ENCODE measurements at regions of chr11 and their contacts with region 1.

Region 1: DNA sequence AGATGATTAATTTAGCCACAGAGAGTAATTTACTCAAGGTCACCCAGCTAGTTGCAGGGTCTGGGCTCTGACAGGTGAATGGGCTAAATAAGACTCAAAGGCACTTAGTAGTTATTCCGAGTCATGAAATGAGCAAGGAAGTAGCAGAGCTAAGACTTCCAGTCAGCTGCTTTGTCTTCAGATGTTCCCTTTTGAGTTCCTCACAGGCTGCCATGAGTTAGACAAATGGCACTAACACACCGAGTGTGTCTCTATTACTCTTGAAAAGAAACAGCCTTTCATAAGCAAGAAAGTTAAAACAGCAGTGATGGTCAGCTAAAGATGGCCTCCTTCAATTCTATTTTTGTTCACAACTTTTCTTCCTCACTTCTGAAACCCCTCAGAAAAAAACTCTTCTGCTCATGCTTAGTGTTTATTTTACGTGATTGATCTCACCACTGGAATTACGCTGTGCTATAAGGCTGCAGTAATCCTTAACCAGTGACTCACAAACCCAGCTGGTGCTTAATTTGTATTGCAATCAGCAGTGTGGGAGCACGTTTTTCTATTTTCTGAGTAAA is 389.1 kb downstream of the AASDHPPT start:
- DNase-seq: peak; percentile 76 to 85
- H3K4me3 ChIP-seq: no peak overlapping the region
- H3K4me3 Mint-ChIP-seq: peak overlapping the region; percentile 67
- H3K27ac Mint-ChIP-seq: peak overlapping the region; percentile 88
- H3K4me1 ChIP-seq: peaks cover 92% of the 10 kb centered on the region
- H3K4me1 Mint-ChIP-seq: peaks cover 77% of the 10 kb centered on the region
- H3K27me3 ChIP-seq: no peaks in the 10 kb centered on the region
- H3K27me3 Mint-ChIP-seq: no peaks in the 10 kb centered on the region
- CTCF ChIP-seq: no peak

Region 2: GRCh38 chr11:106021967-106022794 is 444.4 kb before region 1 on chr11 and contains the start of gene MSANTD4:
- CTCF ChIA-PET with region 1: no interaction called
- POLR2A ChIA-PET with region 1: no interaction called
- intact Hi-C with region 1: loop called (anchors 1 kb)
- DNase-seq: peak; percentile 100
- H3K4me3 ChIP-seq: peak within 1 kb of the TSS; percentile 81
- H3K4me3 Mint-ChIP-seq: peak within 1 kb of the TSS; percentile 86
- H3K27ac Mint-ChIP-seq: peak within 1 kb of the TSS; percentile 51
- H3K4me1 ChIP-seq: peaks cover 11% of the 10 kb centered on the region
- H3K4me1 Mint-ChIP-seq: peaks cover 13% of the 10 kb centered on the region
- H3K27me3 ChIP-seq: no peaks in the 10 kb centered on the region
- H3K27me3 Mint-ChIP-seq: no peaks in the 10 kb centered on the region
- CTCF ChIP-seq: peak in 1 of 2 experiments; percentile 3
- total RNA-seq, gene MSANTD4: 24.2 and 25.7 TPM in 2 replicates

Region 3: GRCh38 chr11:106208775-106209174 is 257.8 kb before region 1 on chr11:
- CTCF ChIA-PET with region 1: no interaction called
- POLR2A ChIA-PET with region 1: no interaction called
- intact Hi-C with region 1: loop called (anchors 1 kb)
- DNase-seq: peak; percentile 85 to 95
- H3K4me3 ChIP-seq: no peak overlapping the region
- H3K4me3 Mint-ChIP-seq: peak overlapping the region; percentile 7
- H3K27ac Mint-ChIP-seq: peak overlapping the region; percentile 67
- H3K4me1 ChIP-seq: peaks cover 29% of the 10 kb centered on the region
- H3K4me1 Mint-ChIP-seq: peaks cover 27% of the 10 kb centered on the region
- H3K27me3 ChIP-seq: no peaks in the 10 kb centered on the region
- H3K27me3 Mint-ChIP-seq: no peaks in the 10 kb centered on the region
- CTCF ChIP-seq: no peak

Region 4: DNA sequence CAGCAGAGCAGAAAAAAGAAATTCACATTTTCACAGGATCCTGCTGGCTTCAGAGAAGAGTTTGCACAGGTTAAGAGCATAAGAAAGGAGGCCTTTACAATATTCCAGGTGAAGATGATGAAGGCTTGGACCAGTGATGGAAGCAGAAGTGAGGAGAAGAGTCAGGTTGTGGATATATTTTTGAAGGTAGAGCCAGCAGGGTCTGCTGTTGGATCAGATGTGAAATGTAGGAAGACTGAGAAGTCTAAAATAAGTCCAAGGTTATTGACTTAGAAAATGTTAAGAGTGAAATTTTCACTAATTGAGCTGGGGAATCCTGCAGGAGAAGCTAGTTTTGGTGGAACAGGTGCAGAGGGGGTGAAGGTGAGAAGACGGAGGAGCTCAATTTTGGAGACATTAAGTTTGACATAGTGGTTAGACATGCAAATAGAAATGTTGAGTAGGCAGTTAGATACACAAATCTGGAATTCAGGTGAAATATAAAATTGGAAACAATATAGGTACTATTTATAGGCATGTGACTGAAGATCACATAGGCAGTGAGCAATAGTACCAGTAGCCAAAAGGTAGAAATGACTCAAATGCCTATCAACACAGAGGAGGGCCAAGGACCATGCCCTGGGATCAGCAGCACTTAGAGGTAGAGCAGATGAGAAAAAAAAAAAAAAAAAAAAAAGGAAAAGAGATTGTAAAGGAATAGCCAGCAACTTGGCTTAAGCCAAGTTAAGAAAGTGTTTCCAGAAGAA is 137.2 kb before region 1 on chr11:
- CTCF ChIA-PET with region 1: no interaction called
- POLR2A ChIA-PET with region 1: no interaction called
- intact Hi-C with region 1: loop called (anchors 5 kb)
- DNase-seq: no peak
- H3K4me3 ChIP-seq: no peak overlapping the region
- H3K4me3 Mint-ChIP-seq: no peak overlapping the region
- H3K27ac Mint-ChIP-seq: no peak overlapping the region
- H3K4me1 ChIP-seq: no peaks in the 10 kb centered on the region; the same call in 1 of the 2 replicates
- H3K4me1 Mint-ChIP-seq: no peaks in the 10 kb centered on the region
- H3K27me3 ChIP-seq: no peaks in the 10 kb centered on the region
- H3K27me3 Mint-ChIP-seq: no peaks in the 10 kb centered on the region
- CTCF ChIP-seq: no peak

Region 5: DNA sequence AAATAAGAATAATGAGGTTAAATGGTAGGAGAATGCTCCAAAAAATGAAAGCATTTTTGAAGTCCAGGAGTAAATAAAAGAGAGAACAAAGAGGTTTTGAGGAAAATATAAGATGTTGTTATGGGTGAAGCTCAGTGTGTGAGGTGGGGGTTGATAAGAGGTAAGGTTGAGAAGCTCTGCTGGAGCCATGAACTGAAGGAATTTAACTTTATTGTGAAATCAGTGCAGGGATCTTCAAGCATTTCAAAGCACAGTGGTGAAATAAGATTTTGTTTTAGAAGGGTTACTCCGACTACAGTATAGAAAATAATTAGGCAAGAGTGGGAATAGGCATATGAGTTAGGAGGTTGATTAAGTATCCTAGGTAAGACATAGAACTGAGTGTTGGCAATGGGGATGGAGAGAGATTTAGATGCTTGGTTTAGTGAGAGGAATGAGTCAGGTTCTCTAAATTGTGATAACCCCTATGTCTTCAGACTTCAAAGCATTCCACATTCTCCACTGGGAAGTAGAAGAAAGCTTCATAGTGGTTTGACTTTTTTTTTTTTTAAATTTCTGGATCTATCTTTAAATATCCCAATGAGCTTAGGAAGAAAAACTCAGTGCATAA is 14.1 kb after region 1 on chr11:
- CTCF ChIA-PET with region 1: interaction called, 6 read pairs
- POLR2A ChIA-PET with region 1: interaction called, 22 read pairs
- intact Hi-C with region 1: loop called (anchors 1 kb)
- DNase-seq: peak in 1 of 2 experiments; percentile 68
- H3K4me3 ChIP-seq: no peak overlapping the region
- H3K4me3 Mint-ChIP-seq: peak overlapping the region; percentile 10
- H3K27ac Mint-ChIP-seq: peak overlapping the region; percentile 86
- H3K4me1 ChIP-seq: peaks cover 66% of the 10 kb centered on the region
- H3K4me1 Mint-ChIP-seq: peaks cover 29% of the 10 kb centered on the region
- H3K27me3 ChIP-seq: no peaks in the 10 kb centered on the region
- H3K27me3 Mint-ChIP-seq: no peaks in the 10 kb centered on the region
- CTCF ChIP-seq: no peak

Region 6: DNA sequence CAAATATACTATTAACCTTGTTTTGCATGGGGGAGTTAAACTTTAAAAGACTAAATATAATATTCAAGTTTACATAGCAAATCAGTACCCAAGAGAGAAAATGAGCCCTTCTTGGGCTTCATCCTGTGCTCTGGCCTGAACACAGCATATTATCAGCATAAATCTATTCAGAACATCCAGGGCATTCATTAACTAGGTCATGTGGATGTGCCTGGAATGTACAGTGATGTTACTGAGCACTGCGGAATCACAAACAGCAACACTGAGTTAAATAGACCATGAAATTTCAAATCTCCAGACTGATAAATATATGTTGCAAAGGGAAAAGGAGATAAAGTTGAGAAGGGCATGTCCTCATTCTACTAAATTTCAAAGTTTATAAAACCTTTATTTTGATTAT is 37.3 kb after region 1 on chr11:
- CTCF ChIA-PET with region 1: no interaction called
- POLR2A ChIA-PET with region 1: no interaction called
- intact Hi-C with region 1: no loop called
- DNase-seq: no peak
- H3K4me3 ChIP-seq: no peak overlapping the region
- H3K4me3 Mint-ChIP-seq: no peak overlapping the region
- H3K27ac Mint-ChIP-seq: no peak overlapping the region
- H3K4me1 ChIP-seq: peaks cover 11% of the 10 kb centered on the region
- H3K4me1 Mint-ChIP-seq: peaks cover 11% of the 10 kb centered on the region
- H3K27me3 ChIP-seq: no peaks in the 10 kb centered on the region
- H3K27me3 Mint-ChIP-seq: no peaks in the 10 kb centered on the region
- CTCF ChIP-seq: no peak

Region 7: DNA sequence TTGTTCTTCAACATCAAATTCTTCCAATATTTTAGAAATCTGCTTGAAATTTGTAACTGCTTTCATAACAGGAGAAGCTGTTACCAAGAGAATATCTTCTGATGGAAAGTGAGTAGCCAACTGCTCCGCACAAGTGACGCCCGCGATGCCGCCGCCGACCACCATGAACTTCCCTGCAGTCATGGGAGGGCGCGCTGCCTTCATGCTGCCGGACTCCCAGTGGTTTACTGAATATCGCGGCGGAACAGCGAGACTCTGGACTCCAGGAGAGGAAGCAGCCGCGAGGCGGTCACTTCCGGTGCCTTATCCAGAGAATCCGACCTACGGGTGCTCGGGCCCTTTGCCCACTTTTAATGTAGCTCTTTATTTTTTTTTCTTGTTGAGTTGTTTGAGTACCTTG is 361.1 kb after region 1 on chr11:
- CTCF ChIA-PET with region 1: no interaction called
- POLR2A ChIA-PET with region 1: no interaction called
- intact Hi-C with region 1: loop called (anchors 2 kb)
- DNase-seq: no peak
- H3K4me3 ChIP-seq: no peak overlapping the region
- H3K4me3 Mint-ChIP-seq: no peak overlapping the region
- H3K27ac Mint-ChIP-seq: no peak overlapping the region
- H3K4me1 ChIP-seq: peaks cover 8% of the 10 kb centered on the region
- H3K4me1 Mint-ChIP-seq: no peaks in the 10 kb centered on the region
- H3K27me3 ChIP-seq: no peaks in the 10 kb centered on the region
- H3K27me3 Mint-ChIP-seq: no peaks in the 10 kb centered on the region
- CTCF ChIP-seq: no peak

Measured in Caco-2 (cell line).